WTC11 (cell line): ENCODE measurements at regions of chr2 and their contacts with region 1.

Region 1: DNA sequence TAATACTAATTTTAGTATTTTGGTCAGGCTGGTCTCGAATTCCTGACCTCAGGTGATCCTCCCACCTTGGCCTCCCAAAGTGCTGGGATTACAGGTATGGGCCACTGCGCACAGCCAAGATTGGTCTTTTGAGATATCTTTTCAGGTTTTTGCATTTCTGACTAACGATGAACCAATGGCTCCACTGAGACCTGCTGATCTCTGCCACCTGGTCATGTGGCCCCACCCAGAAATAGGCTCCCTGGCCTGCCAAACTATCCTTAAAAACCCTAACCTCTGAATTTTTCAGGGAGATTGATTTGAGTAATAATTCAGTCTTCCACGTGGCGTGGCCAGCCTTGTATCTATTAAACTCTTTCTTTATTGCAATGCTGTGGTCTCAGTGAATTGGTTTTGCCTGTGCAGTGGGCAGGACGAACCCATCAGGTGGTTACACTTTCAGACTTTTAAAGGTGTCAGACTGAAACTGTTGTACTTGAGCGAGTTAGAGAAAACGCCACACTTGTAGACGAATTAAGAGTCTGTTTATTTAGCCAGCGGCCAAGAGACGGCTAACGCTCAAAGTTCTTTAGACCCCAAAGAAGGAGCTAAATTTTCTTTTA is 85.8 kb upstream of the MSH6 start:
- DNase-seq: no peak
- ATAC-seq: no peak
- H3K4me3 Mint-ChIP-seq: no peak overlapping the region
- H3K27ac Mint-ChIP-seq: peak overlapping the region; percentile 96
- H3K4me1 Mint-ChIP-seq: peaks cover 64% of the 10 kb centered on the region
- H3K27me3 Mint-ChIP-seq: no peaks in the 10 kb centered on the region
- CTCF ChIP-seq: no peak

Region 2: GRCh38 chr2:47598476-47598875 is 98.6 kb before region 1 on chr2:
- CTCF ChIA-PET with region 1: no interaction called
- POLR2A ChIA-PET with region 1: no interaction called
- DNase-seq: no peak
- ATAC-seq: no peak
- H3K4me3 Mint-ChIP-seq: no peak overlapping the region
- H3K27ac Mint-ChIP-seq: no peak overlapping the region
- H3K4me1 Mint-ChIP-seq: peaks cover 22% of the 10 kb centered on the region
- H3K27me3 Mint-ChIP-seq: peaks cover 5% of the 10 kb centered on the region
- CTCF ChIP-seq: no peak

Region 3: DNA sequence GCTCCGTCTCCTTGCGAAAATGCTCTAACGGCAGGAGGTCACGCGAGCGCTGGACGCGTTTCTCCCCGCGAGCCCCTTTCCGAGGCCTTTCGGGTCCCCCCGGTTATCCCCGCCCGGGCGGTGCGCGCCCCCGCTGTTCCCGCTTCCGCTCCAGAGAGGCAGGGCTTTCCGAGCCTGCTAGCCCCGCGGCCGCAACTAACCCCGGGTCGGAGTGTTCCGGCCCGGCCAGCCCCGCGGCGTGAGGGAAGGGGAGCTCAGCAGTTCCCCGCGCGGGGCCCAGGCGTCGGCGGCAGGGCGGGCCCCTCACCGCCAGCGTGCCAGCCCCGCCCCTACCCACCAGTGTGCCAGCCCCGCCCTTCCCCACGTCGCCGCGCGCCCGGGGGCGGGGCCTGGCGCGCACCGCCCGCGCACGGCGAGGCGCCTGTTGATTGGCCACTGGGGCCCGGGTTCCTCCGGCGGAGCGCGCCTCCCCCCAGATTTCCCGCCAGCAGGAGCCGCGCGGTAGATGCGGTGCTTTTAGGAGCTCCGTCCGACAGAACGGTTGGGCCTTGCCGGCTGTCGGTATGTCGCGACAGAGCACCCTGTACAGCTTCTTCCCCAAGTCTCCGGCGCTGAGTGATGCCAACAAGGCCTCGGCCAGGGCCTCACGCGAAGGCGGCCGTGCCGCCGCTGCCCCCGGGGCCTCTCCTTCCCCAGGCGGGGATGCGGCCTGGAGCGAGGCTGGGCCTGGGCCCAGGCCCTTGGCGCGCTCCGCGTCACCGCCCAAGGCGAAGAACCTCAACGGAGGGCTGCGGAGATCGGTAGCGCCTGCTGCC is 85.8 kb after region 1 on chr2 and contains the start of gene MSH6:
- CTCF ChIA-PET with region 1: no interaction called
- POLR2A ChIA-PET with region 1: interaction called, 10 read pairs
- DNase-seq: peak; percentile 86
- ATAC-seq: peak; percentile 76
- H3K4me3 Mint-ChIP-seq: peak within 1 kb of the TSS; percentile 84
- H3K27ac Mint-ChIP-seq: peak within 1 kb of the TSS; percentile 84
- H3K4me1 Mint-ChIP-seq: peaks cover 28% of the 10 kb centered on the region
- H3K27me3 Mint-ChIP-seq: peaks cover 3% of the 10 kb centered on the region; the same call in 1 of the 2 replicates
- CTCF ChIP-seq: no peak
- total RNA-seq, gene MSH6: 235 to 275 TPM (median 247 TPM) in 3 replicates